Activated CD4-positive, alpha-beta T cell treated with anti-CD3 and anti-CD28 coated beads for 36 hours (primary cell): ENCODE measurements at regions of chr2 and their contacts with region 1.

Region 1: GRCh38 chr2:11583840-11584524 is 50.1 kb downstream of the GREB1 start:
- DNase-seq: peak; percentile 96
- ATAC-seq: peak; percentile 97
- H3K4me3 Mint-ChIP-seq: no peak overlapping the region
- H3K27ac Mint-ChIP-seq: no peak overlapping the region
- H3K4me1 Mint-ChIP-seq: peaks cover 18% of the 10 kb centered on the region
- H3K27me3 Mint-ChIP-seq: peaks cover 10% of the 10 kb centered on the region

Region 2: DNA sequence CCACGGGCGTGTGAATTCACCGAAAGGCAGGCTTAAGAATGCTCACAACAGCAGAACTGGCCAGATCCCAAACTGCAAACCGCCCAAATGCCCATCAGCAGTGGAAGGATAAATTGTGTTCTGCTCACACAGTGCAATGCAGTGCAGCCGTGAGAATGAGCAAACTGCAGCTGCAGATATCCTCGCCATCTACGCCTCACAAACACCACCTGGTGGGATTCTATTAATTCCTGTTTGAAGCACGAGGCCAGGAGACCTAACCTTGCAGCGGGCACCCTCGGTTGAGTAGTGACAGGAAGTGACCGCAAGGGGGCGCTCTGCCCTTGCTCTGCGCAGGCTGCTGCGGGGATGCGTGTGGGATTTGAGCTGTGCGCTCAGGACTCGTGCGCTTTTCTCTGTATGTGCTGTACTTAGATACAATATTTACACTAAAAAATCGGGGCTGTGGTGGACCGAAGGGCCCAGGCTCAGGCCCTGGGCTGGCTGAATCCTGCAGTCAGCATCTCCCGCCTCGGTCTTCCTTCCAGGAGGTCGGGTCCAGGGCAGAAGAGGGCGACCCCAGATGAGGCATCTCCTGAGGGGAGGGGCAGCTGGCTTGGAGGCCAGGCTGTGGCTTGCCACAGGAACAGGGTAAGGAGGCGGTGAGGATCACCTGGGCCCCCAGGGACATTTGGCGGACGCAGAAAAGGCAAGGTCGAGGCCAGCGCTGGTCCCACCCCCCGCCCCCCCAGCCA is 751.6 kb before region 1 on chr2:
- CTCF ChIA-PET with region 1: interaction called, 13 read pairs
- POLR2A ChIA-PET with region 1: no interaction called
- intact Hi-C with region 1: loop called (anchors 1 to 5 kb)
- DNase-seq: peak; percentile 93
- ATAC-seq: peak; percentile 91
- H3K4me3 Mint-ChIP-seq: no peak overlapping the region
- H3K27ac Mint-ChIP-seq: no peak overlapping the region
- H3K4me1 Mint-ChIP-seq: peaks cover 7% of the 10 kb centered on the region
- H3K27me3 Mint-ChIP-seq: peaks cover 9% of the 10 kb centered on the region

Region 3: GRCh38 chr2:11234309-11234708 is 349.7 kb before region 1 on chr2:
- CTCF ChIA-PET with region 1: no interaction called
- POLR2A ChIA-PET with region 1: no interaction called
- intact Hi-C with region 1: loop called in 1 of 2 experiments (anchors 1 kb)
- DNase-seq: no peak
- ATAC-seq: no peak
- H3K4me3 Mint-ChIP-seq: no peak overlapping the region
- H3K27ac Mint-ChIP-seq: no peak overlapping the region
- H3K4me1 Mint-ChIP-seq: peaks cover 11% of the 10 kb centered on the region
- H3K27me3 Mint-ChIP-seq: no peaks in the 10 kb centered on the region

Region 4: GRCh38 chr2:11465497-11466406 is 118.2 kb before region 1 on chr2 and contains the start of gene E2F6:
- CTCF ChIA-PET with region 1: interaction called, 13 read pairs
- POLR2A ChIA-PET with region 1: no interaction called
- intact Hi-C with region 1: loop called (anchors 1 kb)
- DNase-seq: peak; percentile 92
- ATAC-seq: peak; percentile 85
- H3K4me3 Mint-ChIP-seq: peak within 1 kb of the TSS; percentile 81
- H3K27ac Mint-ChIP-seq: peak within 1 kb of the TSS; percentile 92
- H3K4me1 Mint-ChIP-seq: peaks cover 33% of the 10 kb centered on the region
- H3K27me3 Mint-ChIP-seq: no peaks in the 10 kb centered on the region
- total RNA-seq, gene E2F6: 7.2 to 10.6 TPM

Region 5: GRCh38 chr2:11573418-11574175 is 10.4 kb before region 1 on chr2:
- CTCF ChIA-PET with region 1: interaction called, 11 read pairs
- POLR2A ChIA-PET with region 1: no interaction called
- intact Hi-C with region 1: no loop called
- DNase-seq: no peak
- ATAC-seq: no peak
- H3K4me3 Mint-ChIP-seq: no peak overlapping the region
- H3K27ac Mint-ChIP-seq: no peak overlapping the region
- H3K4me1 Mint-ChIP-seq: no peaks in the 10 kb centered on the region
- H3K27me3 Mint-ChIP-seq: no peaks in the 10 kb centered on the region

Region 6: GRCh38 chr2:11681722-11682589 is 98.0 kb after region 1 on chr2:
- CTCF ChIA-PET with region 1: interaction called, 4 read pairs
- POLR2A ChIA-PET with region 1: no interaction called
- intact Hi-C with region 1: loop called in 1 of 2 experiments (anchors 2 kb)
- DNase-seq: peak; percentile 80
- ATAC-seq: peak; percentile 91
- H3K4me3 Mint-ChIP-seq: no peak overlapping the region
- H3K27ac Mint-ChIP-seq: no peak overlapping the region
- H3K4me1 Mint-ChIP-seq: peaks cover 4% of the 10 kb centered on the region
- H3K27me3 Mint-ChIP-seq: peaks cover 10% of the 10 kb centered on the region